Activated CD4-positive, alpha-beta memory T cell treated with anti-CD3 and anti-CD28 coated beads for 36 hours (primary cell): ENCODE measurements at regions of chr4 and their contacts with region 1.

Region 1: DNA sequence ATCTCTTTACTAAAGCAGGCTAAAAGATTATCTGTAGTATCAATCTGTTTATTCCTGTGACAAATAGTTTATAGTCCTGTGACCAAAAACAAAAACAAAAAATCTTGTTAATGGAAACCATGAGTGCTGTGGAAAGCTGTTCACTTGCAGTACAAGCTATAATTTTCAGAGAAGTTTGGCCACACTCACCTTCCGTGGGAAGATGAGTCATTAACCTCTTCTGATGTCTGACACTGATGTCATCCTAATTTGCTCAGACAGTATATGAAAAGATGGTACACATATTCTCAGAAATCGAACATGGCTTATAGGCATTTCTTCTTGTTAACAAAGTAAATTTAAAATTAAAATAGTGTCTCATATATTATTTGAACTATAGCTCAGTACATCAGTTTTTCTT is 19.9 kb upstream of the ENPP6 start:
- DNase-seq: peak; percentile 72
- H3K4me3 Mint-ChIP-seq: peak overlapping the region; percentile 33
- H3K27ac Mint-ChIP-seq: peak overlapping the region; percentile 86
- H3K4me1 Mint-ChIP-seq: peaks cover 34% of the 10 kb centered on the region
- H3K27me3 Mint-ChIP-seq: no peaks in the 10 kb centered on the region

Region 2: DNA sequence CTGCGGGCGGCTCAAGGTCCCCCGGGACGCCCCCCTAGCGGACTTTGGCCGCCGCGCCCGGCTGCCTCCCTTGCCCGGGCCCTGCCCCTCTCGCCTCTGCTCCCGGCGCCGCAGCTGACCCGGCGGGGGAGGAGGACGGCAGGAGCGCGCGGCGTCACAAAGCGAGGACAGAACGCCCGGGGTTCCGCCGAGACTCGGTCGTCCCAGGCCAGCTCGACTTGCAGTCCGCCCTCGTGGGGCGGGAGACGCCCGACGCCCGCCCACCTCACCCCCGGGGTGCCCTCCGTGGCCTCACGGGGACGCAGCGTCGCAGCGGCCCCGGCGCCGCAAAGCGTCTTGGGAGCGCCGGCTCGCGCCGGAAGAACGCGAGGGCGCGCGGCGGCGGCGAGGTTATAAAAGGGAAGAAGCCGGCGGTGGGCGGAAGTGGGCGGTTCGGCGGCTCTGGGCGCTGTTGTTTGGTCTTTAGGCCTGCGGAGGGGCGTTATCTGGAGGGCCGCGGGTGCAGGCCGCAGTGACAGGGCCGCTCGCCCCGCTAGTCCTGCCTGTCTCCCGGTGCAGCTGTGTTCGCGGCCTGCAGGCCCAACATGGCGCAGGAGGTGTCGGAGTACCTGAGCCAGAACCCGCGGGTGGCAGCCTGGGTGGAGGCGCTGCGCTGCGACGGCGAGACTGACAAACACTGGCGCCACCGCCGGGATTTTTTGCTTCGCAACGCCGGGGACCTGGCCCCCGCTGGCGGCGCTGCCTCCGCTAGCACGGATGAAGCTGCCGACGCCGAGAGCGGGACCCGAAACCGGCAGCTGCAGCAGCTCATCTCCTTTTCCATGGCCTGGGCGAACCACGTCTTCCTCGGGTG is 793.2 kb before region 1 on chr4 and contains the start of gene CDKN2AIP:
- CTCF ChIA-PET with region 1: no interaction called
- POLR2A ChIA-PET with region 1: no interaction called
- intact Hi-C with region 1: loop called (anchors 10 kb)
- DNase-seq: peak; percentile 95
- H3K4me3 Mint-ChIP-seq: peak within 1 kb of the TSS; percentile 96
- H3K27ac Mint-ChIP-seq: peak within 1 kb of the TSS; percentile 98
- H3K4me1 Mint-ChIP-seq: peaks cover 41% of the 10 kb centered on the region
- H3K27me3 Mint-ChIP-seq: no peaks in the 10 kb centered on the region
- total RNA-seq, gene CDKN2AIP: 23.0 to 23.7 TPM

Region 3: GRCh38 chr4:184168406-184169019 is 69.1 kb before region 1 on chr4:
- CTCF ChIA-PET with region 1: interaction called, 3 read pairs
- POLR2A ChIA-PET with region 1: no interaction called
- intact Hi-C with region 1: loop called (anchors 5 kb)
- DNase-seq: peak; percentile 70
- H3K4me3 Mint-ChIP-seq: no peak overlapping the region
- H3K27ac Mint-ChIP-seq: no peak overlapping the region
- H3K4me1 Mint-ChIP-seq: peaks cover 2% of the 10 kb centered on the region
- H3K27me3 Mint-ChIP-seq: peaks cover 44% of the 10 kb centered on the region

Region 4: DNA sequence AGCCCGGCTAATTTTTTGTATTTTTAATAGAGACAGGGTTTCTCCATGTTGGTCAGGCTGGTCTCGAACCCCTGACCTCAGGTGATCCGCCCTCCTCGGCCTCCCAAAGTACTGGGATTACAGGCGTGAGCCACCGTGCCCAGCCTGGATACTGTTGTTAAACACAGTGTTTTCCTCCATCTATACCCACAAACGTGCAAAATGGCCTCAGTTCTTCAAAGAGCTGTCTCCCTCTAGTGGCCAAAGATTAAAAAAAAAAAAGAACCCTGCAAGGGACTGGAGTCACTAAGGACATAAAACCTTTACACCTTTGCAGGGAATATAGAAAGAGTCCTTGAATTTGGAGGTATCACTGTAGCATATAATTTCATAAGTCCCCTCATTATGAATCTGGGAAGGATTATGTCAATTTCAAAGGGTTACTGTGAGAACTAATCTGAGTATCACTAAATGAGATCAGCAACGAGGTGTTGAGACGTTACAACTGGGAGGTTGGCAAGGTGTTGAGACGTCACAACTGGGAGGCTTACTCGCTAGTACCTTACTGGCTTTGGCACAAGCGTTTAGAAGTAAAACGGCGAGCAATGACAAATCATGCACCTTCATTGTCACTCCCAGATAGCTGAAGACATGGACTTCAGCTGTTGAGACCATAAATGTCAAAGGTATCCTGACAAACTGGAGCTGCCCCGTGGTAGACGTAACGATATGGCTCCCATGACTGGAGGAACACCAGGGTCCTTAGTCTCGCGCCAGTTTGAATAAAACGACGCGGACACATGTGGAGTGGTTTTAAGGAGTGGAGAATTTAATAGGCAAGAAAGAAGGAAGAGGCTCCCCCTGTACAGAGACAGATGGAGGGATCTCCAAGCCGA is 13.4 kb after region 1 on chr4:
- CTCF ChIA-PET with region 1: interaction called, 15 read pairs
- POLR2A ChIA-PET with region 1: no interaction called
- intact Hi-C with region 1: loop called (anchors 1 kb)
- DNase-seq: peak; percentile 45
- H3K4me3 Mint-ChIP-seq: peak overlapping the region; percentile 31
- H3K27ac Mint-ChIP-seq: peak overlapping the region; percentile 26
- H3K4me1 Mint-ChIP-seq: peaks cover 18% of the 10 kb centered on the region
- H3K27me3 Mint-ChIP-seq: peaks cover 2% of the 10 kb centered on the region

Region 5: GRCh38 chr4:184282251-184282713 is 44.7 kb after region 1 on chr4:
- CTCF ChIA-PET with region 1: no interaction called
- POLR2A ChIA-PET with region 1: no interaction called
- intact Hi-C with region 1: loop called (anchors 1 kb)
- DNase-seq: peak; percentile 87
- H3K4me3 Mint-ChIP-seq: peak overlapping the region; percentile 10
- H3K27ac Mint-ChIP-seq: peak overlapping the region; percentile 91
- H3K4me1 Mint-ChIP-seq: peaks cover 71% of the 10 kb centered on the region
- H3K27me3 Mint-ChIP-seq: peaks cover 4% of the 10 kb centered on the region

Region 6: GRCh38 chr4:184287697-184288255 is 50.2 kb after region 1 on chr4:
- CTCF ChIA-PET with region 1: no interaction called
- POLR2A ChIA-PET with region 1: no interaction called
- intact Hi-C with region 1: loop called (anchors 1 kb)
- DNase-seq: no peak
- H3K4me3 Mint-ChIP-seq: no peak overlapping the region
- H3K27ac Mint-ChIP-seq: no peak overlapping the region
- H3K4me1 Mint-ChIP-seq: peaks cover 61% of the 10 kb centered on the region
- H3K27me3 Mint-ChIP-seq: peaks cover 4% of the 10 kb centered on the region

Region 7: GRCh38 chr4:184514121-184514988 is 276.7 kb after region 1 on chr4:
- CTCF ChIA-PET with region 1: no interaction called
- POLR2A ChIA-PET with region 1: interaction called, 4 read pairs
- intact Hi-C with region 1: loop called (anchors 1 kb)
- DNase-seq: peak; percentile 90
- H3K4me3 Mint-ChIP-seq: peak overlapping the region; percentile 38
- H3K27ac Mint-ChIP-seq: peak overlapping the region; percentile 88
- H3K4me1 Mint-ChIP-seq: peaks cover 42% of the 10 kb centered on the region
- H3K27me3 Mint-ChIP-seq: no peaks in the 10 kb centered on the region